HCT116 (cell line): ENCODE measurements at regions of chr9 and their contacts with region 1.

Region 1: DNA sequence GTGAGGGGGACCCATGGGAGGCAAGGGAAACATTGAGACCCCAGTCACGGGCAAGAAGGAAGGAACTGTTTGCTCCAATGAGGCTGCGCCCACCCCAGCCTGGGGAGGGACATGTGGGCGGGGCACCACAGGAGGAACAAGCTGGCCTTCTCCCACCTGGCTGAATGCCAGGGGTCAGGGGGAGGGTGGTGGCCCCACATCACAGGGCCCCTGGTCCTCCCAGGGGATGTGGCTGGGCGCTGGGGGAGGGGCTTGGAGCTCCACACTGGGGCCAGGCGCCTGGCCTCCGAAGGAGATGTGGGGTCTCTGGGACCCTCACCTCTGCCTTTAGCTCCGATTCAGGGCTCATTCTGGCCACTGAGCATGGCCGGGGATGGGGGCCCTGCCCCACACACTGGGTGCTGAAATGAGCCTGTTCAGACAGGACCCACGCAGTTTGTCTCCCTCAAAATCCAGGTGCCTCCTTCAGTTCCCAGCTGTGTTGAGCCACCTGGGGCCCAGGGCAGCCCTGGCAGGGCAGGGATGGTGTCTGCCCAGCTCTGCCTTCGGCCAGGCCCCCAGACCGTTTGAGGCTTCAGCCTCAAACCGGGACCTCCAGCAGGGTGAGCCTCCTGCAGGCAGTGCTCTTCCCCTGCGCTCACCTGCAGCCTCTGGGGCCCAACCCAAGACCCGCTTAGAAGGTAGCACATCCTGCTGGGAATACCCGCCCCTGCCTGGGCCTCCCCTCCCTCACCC is 33.2 kb upstream of the NOTCH1 start:
- DNase-seq: peak; percentile 50
- ATAC-seq: peak; percentile 57
- H3K4me3 ChIP-seq: peak overlapping the region; percentile 37 to 55
- H3K27ac ChIP-seq: peak overlapping the region; percentile 80
- H3K4me1 ChIP-seq: peaks cover 32 to 49% of the 10 kb centered on the region in 2 experiments
- H3K27me3 ChIP-seq: no peaks in the 10 kb centered on the region
- CTCF ChIP-seq: no peak
- POLR2A ChIP-seq: no peak
- RAD21 ChIP-seq: no peak

Region 2: DNA sequence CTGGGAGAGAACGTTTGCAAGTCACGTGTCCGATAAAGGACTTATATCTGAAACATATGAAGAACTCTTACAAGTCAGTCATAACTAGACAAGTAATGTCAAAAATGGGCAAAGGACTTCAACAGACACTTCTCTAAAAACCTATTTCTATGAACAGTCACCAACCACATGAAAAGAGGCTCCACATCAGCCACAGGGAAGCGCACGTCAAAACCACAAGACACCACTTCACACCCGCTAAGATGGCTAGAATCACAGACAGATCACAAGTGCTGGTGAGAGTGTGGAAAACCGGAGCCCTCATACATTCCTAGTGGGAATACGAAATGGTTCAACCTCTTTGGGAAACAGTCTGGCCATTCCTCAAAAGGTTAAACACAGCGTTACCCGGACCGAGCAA is 194.1 kb before region 1 on chr9:
- CTCF ChIA-PET with region 1: no interaction called
- POLR2A ChIA-PET with region 1: no interaction called
- RAD21 ChIA-PET with region 1: no interaction called
- intact Hi-C with region 1: no loop called
- DNase-seq: no peak
- ATAC-seq: no peak
- H3K4me3 ChIP-seq: no peak overlapping the region
- H3K27ac ChIP-seq: no peak overlapping the region
- H3K4me1 ChIP-seq: no peaks in the 10 kb centered on the region
- H3K27me3 ChIP-seq: no peaks in the 10 kb centered on the region
- CTCF ChIP-seq: no peak
- POLR2A ChIP-seq: no peak
- RAD21 ChIP-seq: no peak

Region 3: GRCh38 chr9:136545966-136546698 is 33.0 kb before region 1 on chr9 and contains the start of gene NOTCH1:
- CTCF ChIA-PET with region 1: no interaction called
- POLR2A ChIA-PET with region 1: no interaction called
- RAD21 ChIA-PET with region 1: no interaction called
- intact Hi-C with region 1: loop called (anchors 2 kb)
- DNase-seq: peak; percentile 87
- ATAC-seq: peak; percentile 84
- H3K4me3 ChIP-seq: peak within 1 kb of the TSS; percentile 70 to 87
- H3K27ac ChIP-seq: peak within 1 kb of the TSS; percentile 100
- H3K4me1 ChIP-seq: peaks cover 38 to 58% of the 10 kb centered on the region in 2 experiments
- H3K27me3 ChIP-seq: no peaks in the 10 kb centered on the region
- CTCF ChIP-seq: no peak
- POLR2A ChIP-seq: no peak
- RAD21 ChIP-seq: no peak
- total RNA-seq, gene NOTCH1: 36.2 TPM